Dendritic cell treated with granulocyte-macrophage colony-stimulating factor and Interleukin-4, amounts not matched to agents 40 ng/mL and 50 ng/mL, for 4 days (primary cell): ENCODE measurements at regions of chr13 and their contacts with region 1.

Region 1: DNA sequence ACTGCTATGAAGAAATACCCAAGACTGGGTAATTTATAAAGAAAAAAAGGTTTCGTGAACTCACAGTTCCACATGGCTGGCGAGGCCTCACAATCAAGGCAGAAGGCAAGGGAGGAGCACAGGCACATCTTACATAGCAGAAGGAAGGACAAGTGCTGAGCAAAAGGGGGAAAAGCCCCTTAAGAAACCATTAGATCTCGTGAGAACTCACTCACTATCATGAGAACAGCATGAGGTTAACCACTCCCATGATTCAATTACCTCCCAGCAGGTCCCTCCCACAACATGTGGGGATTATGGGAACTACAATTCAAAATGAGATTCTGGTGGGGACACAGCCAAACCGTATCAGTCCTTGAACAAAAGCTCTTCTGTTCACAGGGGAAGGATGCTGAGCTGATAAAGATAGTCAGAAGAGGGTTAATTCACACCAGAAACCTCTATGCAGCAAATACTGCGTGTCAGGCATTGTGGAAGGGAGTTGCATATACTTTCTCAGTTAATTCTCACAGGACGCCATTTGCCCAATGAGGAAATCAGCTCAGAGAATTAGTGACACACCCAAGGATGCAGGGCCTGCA is 246.2 kb downstream of the FOXO1 start:
- H3K4me3 Mint-ChIP-seq: no peak overlapping the region
- H3K27ac Mint-ChIP-seq: no peak overlapping the region
- H3K4me1 Mint-ChIP-seq: peaks cover 48% of the 10 kb centered on the region
- H3K27me3 Mint-ChIP-seq: peaks cover 2% of the 10 kb centered on the region

Region 2: DNA sequence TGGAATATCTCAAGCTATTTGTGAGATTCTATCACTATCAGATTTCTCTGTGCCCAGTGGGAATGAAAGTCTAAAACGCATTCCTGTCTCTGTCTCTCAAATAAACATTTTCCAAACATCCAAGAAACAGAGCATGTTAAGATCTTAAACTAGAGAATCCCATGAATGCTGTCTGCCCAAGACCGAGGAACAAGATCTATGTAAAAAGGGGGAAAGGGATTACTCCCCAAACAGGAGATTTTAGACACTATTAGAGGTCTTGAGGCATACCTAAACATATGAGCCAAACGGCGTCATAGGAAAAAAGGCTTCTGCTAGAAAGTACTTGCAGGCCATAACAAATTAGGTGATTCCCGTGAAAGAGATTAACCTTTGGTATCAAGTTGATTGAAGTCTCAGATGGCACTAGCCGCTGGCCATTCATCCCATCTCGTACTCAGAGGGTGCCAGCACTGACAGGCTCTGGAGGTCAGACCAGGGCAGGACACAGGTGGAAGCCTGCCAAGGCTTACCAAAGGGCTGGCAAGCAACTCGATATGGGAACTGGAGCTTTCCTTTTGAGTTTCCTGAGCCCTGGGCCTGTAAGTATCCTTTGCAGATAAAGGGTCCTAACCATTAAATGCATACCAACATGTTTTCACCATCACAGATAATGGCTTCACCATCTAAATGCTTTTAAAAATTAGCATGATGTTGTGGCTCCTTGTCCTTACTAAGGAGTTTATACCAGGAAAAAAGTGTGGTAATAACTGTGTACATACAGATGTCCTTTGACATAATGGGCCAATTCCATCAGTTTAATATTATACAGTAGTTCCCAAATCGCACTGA is 21.0 kb after region 1 on chr13:
- intact Hi-C with region 1: loop called (anchors 2 kb)
- H3K4me3 Mint-ChIP-seq: no peak overlapping the region
- H3K27ac Mint-ChIP-seq: no peak overlapping the region
- H3K4me1 Mint-ChIP-seq: peaks cover 35% of the 10 kb centered on the region
- H3K27me3 Mint-ChIP-seq: no peaks in the 10 kb centered on the region

Region 3: GRCh38 chr13:40452741-40453667 is 32.8 kb after region 1 on chr13:
- intact Hi-C with region 1: no loop called
- H3K4me3 Mint-ChIP-seq: no peak overlapping the region
- H3K27ac Mint-ChIP-seq: peak overlapping the region; percentile 78
- H3K4me1 Mint-ChIP-seq: peaks cover 33% of the 10 kb centered on the region
- H3K27me3 Mint-ChIP-seq: peaks cover 5% of the 10 kb centered on the region

Region 4: GRCh38 chr13:40517486-40518480 is 97.5 kb after region 1 on chr13:
- intact Hi-C with region 1: no loop called
- H3K4me3 Mint-ChIP-seq: no peak overlapping the region
- H3K27ac Mint-ChIP-seq: no peak overlapping the region
- H3K4me1 Mint-ChIP-seq: peaks cover 21% of the 10 kb centered on the region
- H3K27me3 Mint-ChIP-seq: peaks cover 2% of the 10 kb centered on the region